ENCODE measurements at regions of chr1 and their contacts with region 1.

Region 1: GRCh38 chr1:26145041-26145959 is 13.6 kb upstream of the FAM110D start:
- H3K4me3 ChIP-seq: no peak overlapping the region
- H3K27ac ChIP-seq: no peak overlapping the region
- H3K4me1 ChIP-seq: no peaks in the 10 kb centered on the region
- CTCF ChIP-seq: peak; percentile 79

Region 2: DNA sequence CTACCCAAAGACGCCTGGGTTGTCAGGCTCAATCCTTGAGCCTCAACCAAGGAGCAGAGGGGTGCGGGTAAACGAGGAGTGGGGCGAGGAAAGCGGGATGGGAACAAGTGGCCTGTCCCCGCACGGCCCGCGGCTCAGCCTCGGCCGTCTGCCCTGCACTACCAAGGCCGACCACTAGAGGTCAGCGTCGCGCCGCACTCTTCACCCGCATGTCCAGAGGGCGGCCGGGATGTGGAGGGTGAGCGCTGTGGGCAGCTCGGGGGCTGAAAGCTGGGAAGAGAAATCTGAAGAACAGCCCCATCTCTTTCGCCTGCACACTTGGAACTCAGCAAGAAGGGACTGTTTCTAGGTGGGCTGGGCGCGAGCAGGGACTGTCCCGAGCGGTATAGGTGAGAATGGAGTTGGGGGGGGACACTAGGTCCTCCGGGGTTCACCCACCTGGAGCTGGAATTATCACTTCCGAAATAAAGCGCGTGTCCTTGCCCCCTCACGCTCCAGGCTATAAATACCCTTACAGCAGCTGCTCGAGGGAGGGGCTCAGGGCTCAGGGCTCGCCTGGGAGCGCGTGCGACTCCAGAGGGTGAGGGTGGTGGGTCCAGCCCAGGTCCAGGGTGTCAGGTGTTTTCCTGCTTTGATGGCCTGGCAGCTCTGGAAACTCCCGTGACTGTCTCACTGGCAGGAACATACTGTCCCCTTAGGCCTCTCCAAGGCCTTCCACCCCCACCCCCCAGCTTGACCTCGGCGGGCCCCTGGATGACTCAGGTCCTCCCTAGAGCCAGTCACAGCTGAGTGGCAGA is 109.1 kb before region 1 on chr1:
- CTCF ChIA-PET with region 1: interaction called, 80 read pairs
- POLR2A ChIA-PET with region 1: interaction called, 10 read pairs
- H3K4me3 ChIP-seq: peak overlapping the region; percentile 83
- H3K27ac ChIP-seq: peak overlapping the region; percentile 56; the same call in 1 of the 2 replicates
- H3K4me1 ChIP-seq: no peaks in the 10 kb centered on the region
- CTCF ChIP-seq: peak; percentile 98

Region 3: DNA sequence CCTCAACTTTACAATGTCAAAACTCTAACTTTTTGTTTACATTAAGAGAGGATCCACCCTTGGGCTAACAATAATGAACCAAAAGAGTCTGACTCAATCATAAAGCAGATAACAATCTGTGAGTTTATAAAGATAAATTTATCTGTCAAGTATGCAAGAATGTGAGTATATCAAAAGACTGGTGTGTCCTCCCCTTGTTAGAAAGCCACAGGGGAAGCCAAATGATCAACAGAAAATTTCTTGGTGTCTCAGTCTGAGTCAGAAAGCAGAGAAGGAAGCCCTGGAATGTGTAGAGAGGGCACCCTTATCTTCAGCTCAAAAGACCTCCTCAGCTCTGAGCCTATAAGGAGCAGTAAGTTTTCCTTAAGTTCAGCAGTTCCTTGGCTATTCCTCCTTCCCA is 47.6 kb before region 1 on chr1:
- CTCF ChIA-PET with region 1: interaction called, 129 read pairs
- POLR2A ChIA-PET with region 1: no interaction called
- H3K4me3 ChIP-seq: no peak overlapping the region
- H3K27ac ChIP-seq: no peak overlapping the region
- H3K4me1 ChIP-seq: no peaks in the 10 kb centered on the region
- CTCF ChIP-seq: no peak

Region 4: GRCh38 chr1:26126321-26127084 is 18.8 kb before region 1 on chr1:
- CTCF ChIA-PET with region 1: interaction called, 39 read pairs
- POLR2A ChIA-PET with region 1: interaction called, 3 read pairs
- H3K4me3 ChIP-seq: no peak overlapping the region
- H3K27ac ChIP-seq: peak overlapping the region; percentile 21; the same call in 1 of the 2 replicates
- H3K4me1 ChIP-seq: peaks cover 10% of the 10 kb centered on the region; the same call in 1 of the 2 replicates
- CTCF ChIP-seq: no peak

Region 5: DNA sequence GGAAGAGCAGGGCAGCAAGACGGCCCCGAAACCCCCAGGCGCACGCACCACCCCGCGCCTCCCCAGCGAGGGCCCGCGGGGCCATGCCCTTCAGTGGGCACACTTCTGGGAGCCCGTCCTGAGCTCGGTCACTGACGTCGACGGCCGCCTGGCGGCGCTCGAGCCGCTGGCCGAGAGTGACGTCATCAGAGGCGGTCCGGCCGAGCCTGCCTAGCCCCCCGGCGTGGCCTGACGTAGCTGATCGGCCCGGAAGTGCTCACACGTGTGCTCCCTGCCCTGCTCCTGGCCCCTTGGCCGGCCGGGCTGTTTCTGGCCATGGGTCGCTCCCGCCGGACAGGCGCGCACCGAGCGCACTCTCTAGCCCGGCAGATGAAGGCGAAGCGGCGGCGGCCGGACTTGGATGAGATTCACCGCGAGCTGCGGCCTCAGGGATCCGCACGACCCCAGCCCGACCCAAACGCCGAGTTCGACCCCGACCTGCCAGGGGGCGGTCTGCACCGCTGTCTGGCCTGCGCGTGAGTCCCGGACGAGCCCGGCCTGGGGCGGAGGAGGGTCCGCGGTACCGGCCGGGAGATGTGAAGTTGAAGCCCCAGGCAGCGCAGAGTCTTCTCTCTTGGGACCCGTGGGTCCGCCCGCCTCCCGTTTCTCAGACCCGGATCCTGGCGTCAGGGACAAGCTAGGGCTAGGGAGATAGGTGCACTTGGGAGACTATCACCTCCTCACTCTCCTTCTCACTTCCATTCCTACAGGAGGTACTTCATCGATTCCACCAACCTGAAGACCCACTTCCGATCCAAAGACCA is 24.6 kb after region 1 on chr1 and contains the start of gene ZNF593:
- CTCF ChIA-PET with region 1: interaction called, 11 read pairs
- POLR2A ChIA-PET with region 1: interaction called, 3 read pairs
- H3K4me3 ChIP-seq: peak within 1 kb of the TSS; percentile 68
- H3K27ac ChIP-seq: peak within 1 kb of the TSS; percentile 59; the same call in 1 of the 2 replicates
- H3K4me1 ChIP-seq: peaks cover 7% of the 10 kb centered on the region; the same call in 1 of the 2 replicates
- CTCF ChIP-seq: peak; percentile 98

Measured in HEK293 (cell line).